ENCODE measurements at regions of chr1 and their contacts with region 1.

Region 1: DNA sequence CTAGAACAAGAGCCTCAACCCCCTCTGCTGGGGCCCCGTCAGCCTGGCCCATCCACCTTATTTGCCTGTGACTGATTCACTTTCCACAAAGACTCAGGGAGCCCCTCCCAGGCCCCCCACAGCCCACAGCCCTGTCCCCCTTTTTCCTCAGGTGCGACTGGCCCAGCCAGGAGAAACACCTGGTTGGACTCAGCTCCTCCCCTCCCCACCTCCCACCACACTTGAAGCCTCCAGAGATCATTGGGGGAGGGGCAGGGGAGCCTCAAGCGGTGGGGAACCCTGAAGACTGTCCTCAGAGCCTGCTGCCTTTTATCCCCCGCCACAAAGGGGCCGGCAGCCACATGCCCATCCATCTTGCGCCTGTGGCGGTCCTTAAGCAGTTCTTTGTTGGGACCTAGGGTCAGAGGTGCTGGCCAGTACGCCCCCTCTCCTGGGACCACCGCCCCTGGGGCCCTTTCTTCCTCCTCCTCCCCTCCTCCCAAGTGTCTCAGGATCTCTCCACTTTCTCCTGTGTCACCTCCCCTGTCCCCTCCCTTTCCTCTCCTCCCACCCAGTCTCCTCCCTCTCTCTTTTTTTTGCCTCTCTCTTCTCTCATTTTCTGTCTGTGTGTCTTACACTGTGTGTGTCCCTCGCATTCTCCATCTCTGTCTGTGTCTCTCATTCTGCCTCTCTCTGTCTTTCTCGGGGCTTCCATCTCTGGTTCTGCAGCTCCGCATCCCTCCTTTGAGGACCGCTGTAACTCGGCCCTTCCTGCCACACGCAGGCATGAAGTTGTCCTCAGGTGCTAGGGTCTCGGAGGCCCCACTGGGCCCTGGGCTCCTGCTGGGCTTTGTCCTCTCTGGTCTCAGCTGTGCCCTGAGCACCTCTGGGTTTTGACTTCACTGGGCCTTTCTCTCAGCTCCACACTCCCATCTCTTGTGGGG is 12.2 kb downstream of the CRABP2 start:
- DNase-seq: no peak
- H3K4me3 ChIP-seq: no peak overlapping the region
- H3K27ac ChIP-seq: no peak overlapping the region
- H3K4me1 ChIP-seq: peaks cover 0 to 7% of the 10 kb centered on the region in 2 donors
- H3K27me3 ChIP-seq: peaks cover 10% of the 10 kb centered on the region
- CTCF ChIP-seq: no peak
- POLR2A ChIP-seq: no peak

Region 2: DNA sequence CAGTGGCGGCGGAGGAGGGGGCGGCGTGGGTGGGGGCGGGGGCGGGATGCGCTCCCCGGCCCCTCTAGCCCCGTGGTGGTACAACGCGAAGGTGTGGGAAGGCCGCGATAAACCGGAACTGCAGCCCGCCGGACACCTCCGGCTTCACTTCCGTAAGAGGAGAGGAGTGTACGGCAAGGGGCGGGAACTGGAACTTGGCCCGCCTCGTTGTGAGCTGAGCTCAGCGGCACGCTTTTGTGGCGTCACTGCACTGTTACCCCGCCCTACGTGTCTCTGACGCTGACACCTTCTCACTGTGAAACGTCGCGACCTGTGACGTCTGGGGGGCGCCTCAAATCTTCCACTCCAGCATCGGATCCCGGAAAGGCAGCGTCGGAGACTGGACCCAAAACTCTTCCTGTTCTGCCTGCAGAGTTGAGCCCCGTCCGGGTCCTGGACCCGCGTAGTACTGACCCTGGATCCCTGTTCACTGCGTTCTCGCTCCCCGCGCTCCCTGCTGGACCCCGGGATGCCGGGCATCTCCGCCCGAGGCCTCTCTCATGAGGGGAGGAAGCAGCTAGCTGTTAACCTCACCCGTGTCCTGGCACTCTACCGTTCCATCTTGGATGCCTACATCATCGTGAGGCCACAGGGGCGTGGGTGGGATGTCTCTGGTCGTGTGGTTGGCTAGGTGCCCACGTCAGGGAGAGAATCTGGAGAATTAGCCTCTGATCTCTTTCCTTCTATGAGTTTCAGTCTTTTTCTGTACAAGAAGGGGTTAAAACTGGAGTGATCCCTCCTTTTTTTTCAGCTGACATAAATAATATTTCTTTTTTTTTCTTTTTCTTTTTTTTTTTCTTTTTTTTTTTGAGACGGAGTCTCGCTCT is 35.6 kb after region 1 on chr1 and contains the start of gene ISG20L2:
- intact Hi-C with region 1: loop called (anchors 2 kb)
- DNase-seq: peak; percentile 95 to 99 (median 98)
- H3K4me3 ChIP-seq: peak within 1 kb of the TSS; percentile 81 to 96 (median 93)
- H3K27ac ChIP-seq: peak within 1 kb of the TSS; percentile 84 to 98 (median 90)
- H3K4me1 ChIP-seq: peaks cover 31 to 42% of the 10 kb centered on the region in 2 donors
- H3K27me3 ChIP-seq: no peaks in the 10 kb centered on the region
- CTCF ChIP-seq: peak in 2 of 6 experiments; percentile 3 to 10
- POLR2A ChIP-seq: peak; percentile 61 to 77
- total RNA-seq, gene ISG20L2: 10.6 to 38.5 (median 19.3) TPM

Measured in adrenal gland (tissue), 19 donors.